Heart right ventricle (tissue), 16 donors: ENCODE measurements at regions of chr3 and their contacts with region 1.

Region 1: GRCh38 chr3:158384019-158384418 is 187.0 kb upstream of the MLF1 start:
- DNase-seq: no peak
- ATAC-seq: no peak
- H3K4me3 ChIP-seq: no peak overlapping the region
- H3K27ac ChIP-seq: no peak overlapping the region
- H3K4me1 ChIP-seq: no peaks in the 10 kb centered on the region
- H3K27me3 ChIP-seq: no peaks in the 10 kb centered on the region
- CTCF ChIP-seq: no peak

Region 2: DNA sequence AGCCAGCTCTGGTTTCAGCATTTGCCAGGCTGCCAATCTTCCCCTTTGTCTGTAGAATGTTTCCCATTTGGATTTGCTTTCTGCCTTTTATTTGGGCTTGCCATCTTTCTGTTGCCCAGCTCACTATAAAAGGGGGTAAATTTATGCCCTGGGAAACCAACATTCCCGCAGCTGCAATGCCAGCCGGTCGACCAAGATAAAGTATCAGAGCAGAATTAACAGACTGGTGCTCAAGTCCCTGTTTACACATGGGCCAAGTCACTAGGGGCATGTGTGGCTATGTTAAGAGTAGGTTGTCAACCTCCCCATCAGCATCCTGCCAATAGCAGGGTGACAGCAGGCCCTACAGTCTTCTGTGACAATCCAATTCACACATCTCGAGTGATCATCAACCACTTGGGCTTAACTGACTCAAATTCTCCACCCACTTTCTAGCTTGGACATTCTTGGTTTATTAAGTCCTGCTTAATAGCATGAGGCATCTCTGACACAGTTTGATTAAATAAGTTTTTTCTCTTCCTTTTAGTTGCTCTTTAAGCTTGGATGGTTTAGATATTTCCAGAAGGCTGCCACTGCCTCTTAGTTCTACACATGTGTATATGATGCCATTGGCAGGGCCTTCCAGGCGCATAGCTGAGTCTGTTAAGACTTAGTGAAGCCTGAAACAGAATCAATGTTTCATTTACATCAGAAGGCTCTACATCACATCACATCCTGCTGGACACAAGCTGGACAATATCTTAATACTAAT is 856.7 kb before region 1 on chr3:
- intact Hi-C with region 1: loop called in 1 of 10 experiments (anchors 5 kb)
- DNase-seq: no peak
- ATAC-seq: no peak
- H3K4me3 ChIP-seq: no peak overlapping the region
- H3K27ac ChIP-seq: no peak overlapping the region
- H3K4me1 ChIP-seq: peaks cover 0 to 4% (median 0%) of the 10 kb centered on the region in 9 donors
- H3K27me3 ChIP-seq: no peaks in the 10 kb centered on the region
- CTCF ChIP-seq: no peak

Region 3: DNA sequence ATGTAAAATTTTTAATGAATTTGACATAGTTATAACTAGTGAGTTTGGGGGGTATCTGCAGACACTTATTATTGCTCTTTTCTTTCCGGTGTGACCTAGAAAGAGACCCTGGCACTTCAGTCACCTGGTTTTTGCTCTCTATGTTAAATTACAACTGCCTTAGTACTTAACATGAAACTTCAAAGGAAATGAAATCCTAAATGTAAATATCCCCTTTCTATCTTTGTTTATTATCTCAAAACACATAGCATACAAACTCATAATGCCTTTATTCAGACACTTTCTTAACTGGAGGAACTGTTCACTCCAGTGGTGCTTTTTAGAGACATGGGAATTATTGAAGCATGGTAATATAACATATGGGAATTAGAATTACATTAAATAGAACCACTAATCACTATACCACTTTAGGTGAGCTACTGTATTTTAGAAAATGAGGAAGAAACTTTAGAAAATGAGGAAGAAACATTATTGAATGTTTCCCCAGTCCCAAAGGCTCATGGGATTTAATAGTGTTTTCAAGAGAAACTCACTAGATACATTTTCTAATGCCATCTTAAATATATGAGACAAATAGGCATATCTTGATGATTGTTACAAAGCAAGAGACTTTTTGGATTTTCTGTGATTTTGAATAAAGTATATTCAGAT is 67.5 kb after region 1 on chr3:
- intact Hi-C with region 1: loop called in 1 of 10 experiments (anchors 2 kb)
- DNase-seq: no peak
- ATAC-seq: no peak
- H3K4me3 ChIP-seq: no peak overlapping the region
- H3K27ac ChIP-seq: no peak overlapping the region
- H3K4me1 ChIP-seq: no peaks in the 10 kb centered on the region
- H3K27me3 ChIP-seq: no peaks in the 10 kb centered on the region
- CTCF ChIP-seq: no peak

Region 4: DNA sequence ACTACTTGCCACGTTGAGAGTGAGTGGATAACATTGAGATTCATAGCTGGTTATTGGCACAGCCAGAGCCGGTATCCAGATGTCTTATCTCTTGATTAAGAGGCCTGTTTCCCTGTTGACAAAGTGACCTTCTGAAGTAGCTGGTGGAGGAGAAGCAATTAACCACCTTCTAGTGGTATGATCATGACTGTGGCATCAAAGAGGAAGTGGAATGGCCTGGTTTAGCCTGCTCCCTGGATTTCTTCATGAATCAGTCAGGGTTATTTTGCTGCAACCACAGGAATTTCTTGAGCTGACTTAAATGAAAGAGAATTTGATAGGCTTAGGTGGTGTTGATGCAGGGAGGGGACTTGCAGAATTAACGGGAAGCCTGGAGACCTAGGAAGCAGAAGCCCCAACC is 816.2 kb after region 1 on chr3:
- intact Hi-C with region 1: no loop called
- DNase-seq: no peak
- ATAC-seq: no peak
- H3K4me3 ChIP-seq: no peak overlapping the region
- H3K27ac ChIP-seq: no peak overlapping the region
- H3K4me1 ChIP-seq: no peaks in the 10 kb centered on the region
- H3K27me3 ChIP-seq: no peaks in the 10 kb centered on the region
- CTCF ChIP-seq: no peak